CD14-positive monocyte (primary cell): ENCODE measurements at regions of chr9 and their contacts with region 1.

Region 1: GRCh38 chr9:113876151-113876992 is at the start of gene ZNF618:
- DNase-seq: peak in 1 of 3 donors; percentile 16
- H3K4me3 ChIP-seq: peak within 1 kb of the TSS; percentile 51 to 86 (median 72)
- H3K4me3 Mint-ChIP-seq: peak within 1 kb of the TSS; percentile 96 to 99
- H3K27ac ChIP-seq: peak within 1 kb of the TSS in 1 of 2 donors; percentile 42
- H3K27ac Mint-ChIP-seq: peak within 1 kb of the TSS in 6 of 7 donors; percentile 2 to 88 (median 66)
- H3K4me1 ChIP-seq: peaks cover 3 to 6% of the 10 kb centered on the region in 2 donors
- H3K4me1 Mint-ChIP-seq: peaks cover 13% of the 10 kb centered on the region
- H3K27me3 ChIP-seq: peaks cover 3 to 10% of the 10 kb centered on the region in 2 donors
- H3K27me3 Mint-ChIP-seq: peaks cover 12 to 26% (median 14%) of the 10 kb centered on the region in 3 donors
- CTCF ChIP-seq: no peak
- polyA plus RNA-seq, gene ZNF618: 0.53 to 1.9 (median 0.78) TPM

Region 2: DNA sequence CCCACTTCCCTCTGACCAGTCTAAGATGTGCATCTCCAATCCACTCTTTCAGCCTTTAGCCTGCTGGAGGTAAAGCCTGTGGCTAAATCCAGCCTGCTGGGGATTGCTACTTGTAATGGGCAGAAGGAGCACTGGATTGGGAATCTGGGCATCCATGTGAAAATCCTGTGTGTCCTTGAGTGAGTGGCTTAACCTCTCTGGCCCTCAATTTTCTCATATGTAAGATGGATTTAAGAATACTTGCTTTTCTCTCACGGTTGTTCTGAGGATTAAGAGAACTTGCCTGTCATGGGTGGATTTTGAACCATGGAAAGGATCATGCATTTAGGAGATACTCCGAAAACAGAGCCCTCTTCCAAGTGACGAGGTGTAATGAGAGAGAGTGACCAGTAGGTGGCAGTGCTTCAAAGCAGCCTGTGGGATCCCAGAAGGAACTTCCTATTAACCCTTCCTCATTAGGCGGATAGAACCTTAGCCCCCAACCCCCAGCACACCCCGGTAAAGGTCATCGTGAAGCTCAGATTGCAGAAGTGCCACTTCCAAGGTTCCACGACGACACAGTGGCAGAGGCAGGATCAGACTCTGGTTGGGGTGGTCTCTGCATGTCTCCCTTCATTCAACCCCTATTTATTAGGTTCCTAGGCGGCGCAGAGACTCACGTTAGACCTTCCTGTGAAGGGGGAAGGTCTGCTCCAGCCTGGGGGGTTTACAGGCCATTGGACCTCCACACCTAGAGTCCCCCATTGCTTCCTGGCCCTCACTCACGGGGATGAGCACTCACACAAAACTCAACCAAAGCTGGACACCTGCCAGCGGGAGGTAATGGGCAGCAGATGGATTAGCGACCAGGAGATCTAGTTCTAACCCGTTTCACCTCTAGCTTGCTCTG is 69.0 kb before region 1 on chr9:
- intact Hi-C with region 1: loop called (anchors 2 to 5 kb)
- DNase-seq: peak; percentile 49 to 62 (median 60)
- H3K4me3 ChIP-seq: peak overlapping the region in 1 of 3 experiments; percentile 43
- H3K4me3 Mint-ChIP-seq: peak overlapping the region; percentile 24 to 74
- H3K27ac ChIP-seq: no peak overlapping the region
- H3K27ac Mint-ChIP-seq: no peak overlapping the region
- H3K4me1 ChIP-seq: peaks cover 3 to 13% of the 10 kb centered on the region in 2 donors
- H3K4me1 Mint-ChIP-seq: peaks cover 25% of the 10 kb centered on the region
- H3K27me3 ChIP-seq: no peaks in the 10 kb centered on the region
- H3K27me3 Mint-ChIP-seq: peaks cover 0 to 2% (median 2%) of the 10 kb centered on the region in 3 donors
- CTCF ChIP-seq: peak; percentile 90